ENCODE measurements at regions of chr9 and their contacts with region 1.

Region 1: DNA sequence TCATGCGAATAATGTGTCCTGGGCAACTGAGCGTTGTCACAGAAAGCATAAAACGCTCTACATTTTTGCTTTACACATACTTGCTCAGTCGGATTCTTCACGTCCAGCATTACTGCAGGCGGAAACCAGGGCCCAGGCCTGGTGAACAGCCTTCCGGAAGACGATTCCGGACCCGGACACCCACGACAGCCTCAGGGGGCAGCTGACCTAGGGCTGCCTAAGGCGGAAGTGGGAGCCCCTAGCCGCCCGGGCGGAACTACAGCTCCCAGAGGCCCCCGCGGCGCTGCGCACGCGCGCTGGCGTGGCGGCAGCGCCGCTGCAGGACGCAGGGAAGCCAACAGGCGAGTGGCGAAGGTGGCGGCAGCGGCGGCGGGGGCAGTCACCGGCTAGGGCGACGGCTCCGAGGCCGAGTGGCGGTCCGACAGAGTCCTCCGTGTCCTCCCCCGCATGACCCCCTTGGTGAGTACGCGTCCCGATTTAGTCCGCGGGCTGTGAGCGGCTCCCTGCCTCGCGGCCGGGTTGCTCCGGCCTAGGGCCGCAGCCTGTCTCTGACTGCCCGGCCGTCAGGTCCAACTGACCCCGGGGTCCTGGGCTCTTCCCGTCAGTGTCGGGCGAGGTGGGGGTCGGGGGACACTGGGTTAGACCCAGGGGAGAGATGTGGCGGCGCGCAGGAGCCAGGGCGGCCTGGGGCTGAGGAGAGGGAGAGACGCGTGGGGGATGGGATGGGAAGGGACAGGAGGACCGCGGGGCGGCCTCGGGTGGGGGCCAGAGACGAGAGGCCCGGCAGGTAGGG is at the start of gene GAPVD1:
- DNase-seq: peak; percentile 75 to 94 (median 84)
- ATAC-seq: peak; percentile 89
- H3K4me3 ChIP-seq: peak within 1 kb of the TSS; percentile 100
- H3K4me3 Mint-ChIP-seq: peak within 1 kb of the TSS; percentile 92
- H3K27ac ChIP-seq: peak within 1 kb of the TSS; percentile 77 to 83
- H3K27ac Mint-ChIP-seq: peak within 1 kb of the TSS; percentile 83
- H3K4me1 ChIP-seq: peaks cover 30% of the 10 kb centered on the region
- H3K4me1 Mint-ChIP-seq: peaks cover 51% of the 10 kb centered on the region
- H3K27me3 ChIP-seq: no peaks in the 10 kb centered on the region
- H3K27me3 Mint-ChIP-seq: no peaks in the 10 kb centered on the region
- CTCF ChIP-seq: no peak
- total RNA-seq, gene GAPVD1: 74.1 to 82.2 TPM

Region 2: GRCh38 chr9:124868511-124869465 is 392.9 kb before region 1 on chr9:
- CTCF ChIA-PET with region 1: no interaction called
- POLR2A ChIA-PET with region 1: no interaction called
- intact Hi-C with region 1: loop called in 1 of 2 experiments (anchors 2 kb)
- DNase-seq: peak; percentile 76 to 95 (median 87)
- ATAC-seq: peak; percentile 75
- H3K4me3 ChIP-seq: peak overlapping the region; percentile 84
- H3K4me3 Mint-ChIP-seq: peak overlapping the region; percentile 92
- H3K27ac ChIP-seq: peak overlapping the region; percentile 93 to 96
- H3K27ac Mint-ChIP-seq: peak overlapping the region; percentile 92
- H3K4me1 ChIP-seq: peaks cover 58% of the 10 kb centered on the region
- H3K4me1 Mint-ChIP-seq: peaks cover 56% of the 10 kb centered on the region
- H3K27me3 ChIP-seq: no peaks in the 10 kb centered on the region
- H3K27me3 Mint-ChIP-seq: no peaks in the 10 kb centered on the region
- CTCF ChIP-seq: no peak

Region 3: GRCh38 chr9:125189361-125190289 is 72.1 kb before region 1 on chr9 and contains the start of gene PPP6C:
- CTCF ChIA-PET with region 1: interaction called, 4 read pairs
- POLR2A ChIA-PET with region 1: no interaction called
- intact Hi-C with region 1: loop called in 1 of 2 experiments (anchors 2 kb)
- DNase-seq: peak; percentile 95 to 99 (median 97)
- ATAC-seq: peak; percentile 92
- H3K4me3 ChIP-seq: peak within 1 kb of the TSS; percentile 100
- H3K4me3 Mint-ChIP-seq: peak within 1 kb of the TSS; percentile 91
- H3K27ac ChIP-seq: peak within 1 kb of the TSS; percentile 95 to 98
- H3K27ac Mint-ChIP-seq: peak within 1 kb of the TSS; percentile 96
- H3K4me1 ChIP-seq: peaks cover 77% of the 10 kb centered on the region
- H3K4me1 Mint-ChIP-seq: peaks cover 73% of the 10 kb centered on the region
- H3K27me3 ChIP-seq: no peaks in the 10 kb centered on the region
- H3K27me3 Mint-ChIP-seq: no peaks in the 10 kb centered on the region
- CTCF ChIP-seq: peak; percentile 63
- total RNA-seq, gene PPP6C: 32.9 to 35.3 TPM

Region 4: DNA sequence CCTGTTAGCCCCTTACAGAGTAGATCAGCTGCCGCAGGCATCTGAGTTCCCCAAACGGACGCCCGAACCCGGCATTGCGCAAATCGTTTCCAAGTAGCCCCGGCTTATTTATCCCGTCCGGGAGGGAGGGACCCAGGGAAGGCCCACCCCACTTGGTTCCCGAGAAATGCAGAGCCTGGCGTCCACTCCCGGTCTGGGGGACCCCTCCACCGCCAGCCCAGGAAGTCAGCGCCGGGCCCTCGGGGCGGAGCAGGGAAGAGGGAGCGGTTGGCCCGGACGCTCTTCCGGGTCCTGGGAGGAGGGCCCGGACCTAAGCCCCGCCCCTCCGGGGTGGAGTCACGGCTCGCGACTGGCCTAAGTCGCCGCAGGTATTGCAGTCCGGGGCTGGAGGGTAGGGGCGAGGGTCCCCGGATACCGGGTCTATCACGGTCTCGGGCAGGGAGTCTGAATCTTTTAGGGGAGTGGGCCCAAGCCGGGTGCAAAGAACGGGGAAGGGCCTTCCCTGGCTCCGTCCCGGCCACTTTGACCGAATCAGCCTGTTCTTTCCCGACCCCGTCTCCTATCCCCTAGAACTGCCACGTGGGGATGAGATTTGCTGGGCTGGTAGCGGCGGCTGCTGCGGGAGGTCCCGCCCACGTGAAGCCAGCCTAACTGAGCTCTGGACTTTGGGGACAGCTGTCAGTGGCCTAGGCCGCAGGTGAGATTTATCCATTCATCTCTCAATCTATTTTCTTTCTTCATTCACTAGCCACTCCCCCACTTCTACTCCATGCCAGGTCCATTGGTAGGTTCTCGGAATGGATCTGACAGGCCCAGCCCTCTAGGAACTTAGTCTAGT is 61.3 kb before region 1 on chr9 and contains the start of gene RABEPK:
- CTCF ChIA-PET with region 1: interaction called, 3 read pairs
- POLR2A ChIA-PET with region 1: interaction called, 9 read pairs
- intact Hi-C with region 1: loop called in 1 of 2 experiments (anchors 5 kb)
- DNase-seq: peak; percentile 79 to 94 (median 88)
- ATAC-seq: peak; percentile 94
- H3K4me3 ChIP-seq: peak within 1 kb of the TSS; percentile 92
- H3K4me3 Mint-ChIP-seq: peak within 1 kb of the TSS; percentile 93
- H3K27ac ChIP-seq: peak within 1 kb of the TSS; percentile 63 to 91
- H3K27ac Mint-ChIP-seq: peak within 1 kb of the TSS; percentile 79
- H3K4me1 ChIP-seq: peaks cover 54% of the 10 kb centered on the region
- H3K4me1 Mint-ChIP-seq: peaks cover 63% of the 10 kb centered on the region
- H3K27me3 ChIP-seq: no peaks in the 10 kb centered on the region
- H3K27me3 Mint-ChIP-seq: no peaks in the 10 kb centered on the region
- CTCF ChIP-seq: no peak
- total RNA-seq, gene RABEPK: 6.8 to 8.3 TPM

Region 5: DNA sequence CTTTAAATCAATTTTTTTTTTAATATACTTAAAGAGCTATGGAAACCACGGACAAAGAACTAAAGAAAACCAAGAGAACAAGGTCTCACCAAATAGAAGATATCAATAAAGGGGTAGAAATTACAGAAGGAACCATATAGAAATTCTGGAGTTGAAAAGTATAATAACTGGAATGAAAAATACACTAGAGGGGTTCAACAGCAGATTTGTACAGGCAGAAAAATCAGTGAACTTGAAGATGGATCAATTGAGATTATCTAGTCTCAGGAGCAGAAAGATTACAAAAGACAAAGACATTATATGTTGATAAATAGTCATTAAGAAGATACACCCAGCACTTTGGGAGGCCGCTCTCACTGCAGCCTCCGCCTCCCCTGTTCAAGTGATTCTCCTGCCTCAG is 56.0 kb after region 1 on chr9:
- CTCF ChIA-PET with region 1: interaction called, 4 read pairs
- POLR2A ChIA-PET with region 1: no interaction called
- intact Hi-C with region 1: loop called in 1 of 2 experiments (anchors 10 kb)
- DNase-seq: no peak
- ATAC-seq: no peak
- H3K4me3 ChIP-seq: no peak overlapping the region
- H3K4me3 Mint-ChIP-seq: no peak overlapping the region
- H3K27ac ChIP-seq: no peak overlapping the region
- H3K27ac Mint-ChIP-seq: no peak overlapping the region
- H3K4me1 ChIP-seq: no peaks in the 10 kb centered on the region
- H3K4me1 Mint-ChIP-seq: no peaks in the 10 kb centered on the region
- H3K27me3 ChIP-seq: no peaks in the 10 kb centered on the region
- H3K27me3 Mint-ChIP-seq: no peaks in the 10 kb centered on the region
- CTCF ChIP-seq: no peak

Region 6: GRCh38 chr9:126125177-126125972 is 863.7 kb after region 1 on chr9:
- CTCF ChIA-PET with region 1: no interaction called
- POLR2A ChIA-PET with region 1: no interaction called
- intact Hi-C with region 1: no loop called
- DNase-seq: no peak
- ATAC-seq: no peak
- H3K4me3 ChIP-seq: no peak overlapping the region
- H3K4me3 Mint-ChIP-seq: no peak overlapping the region
- H3K27ac ChIP-seq: no peak overlapping the region
- H3K27ac Mint-ChIP-seq: no peak overlapping the region
- H3K4me1 ChIP-seq: no peaks in the 10 kb centered on the region
- H3K4me1 Mint-ChIP-seq: no peaks in the 10 kb centered on the region
- H3K27me3 ChIP-seq: peaks cover 12 to 21% of the 10 kb centered on the region in 2 experiments
- H3K27me3 Mint-ChIP-seq: peaks cover 66% of the 10 kb centered on the region
- CTCF ChIP-seq: no peak

Region 7: GRCh38 chr9:126804696-126805545 is 1543.2 kb after region 1 on chr9 and contains the start of gene ZBTB43:
- CTCF ChIA-PET with region 1: no interaction called
- POLR2A ChIA-PET with region 1: no interaction called
- intact Hi-C with region 1: loop called in 1 of 2 experiments (anchors 5 kb)
- DNase-seq: peak; percentile 97 to 99 (median 98)
- ATAC-seq: peak; percentile 85
- H3K4me3 ChIP-seq: peak within 1 kb of the TSS; percentile 75
- H3K4me3 Mint-ChIP-seq: peak within 1 kb of the TSS; percentile 99
- H3K27ac ChIP-seq: peak within 1 kb of the TSS; percentile 79 to 88
- H3K27ac Mint-ChIP-seq: peak within 1 kb of the TSS; percentile 96
- H3K4me1 ChIP-seq: peaks cover 19% of the 10 kb centered on the region
- H3K4me1 Mint-ChIP-seq: peaks cover 49% of the 10 kb centered on the region
- H3K27me3 ChIP-seq: no peaks in the 10 kb centered on the region
- H3K27me3 Mint-ChIP-seq: no peaks in the 10 kb centered on the region
- CTCF ChIP-seq: no peak
- total RNA-seq, gene ZBTB43: 47.7 to 50.8 TPM

Measured in CD4-positive, alpha-beta T cell (primary cell).